Vagina (tissue), 2 donors: ENCODE measurements at regions of chr1 and their contacts with region 1.

Region 1: DNA sequence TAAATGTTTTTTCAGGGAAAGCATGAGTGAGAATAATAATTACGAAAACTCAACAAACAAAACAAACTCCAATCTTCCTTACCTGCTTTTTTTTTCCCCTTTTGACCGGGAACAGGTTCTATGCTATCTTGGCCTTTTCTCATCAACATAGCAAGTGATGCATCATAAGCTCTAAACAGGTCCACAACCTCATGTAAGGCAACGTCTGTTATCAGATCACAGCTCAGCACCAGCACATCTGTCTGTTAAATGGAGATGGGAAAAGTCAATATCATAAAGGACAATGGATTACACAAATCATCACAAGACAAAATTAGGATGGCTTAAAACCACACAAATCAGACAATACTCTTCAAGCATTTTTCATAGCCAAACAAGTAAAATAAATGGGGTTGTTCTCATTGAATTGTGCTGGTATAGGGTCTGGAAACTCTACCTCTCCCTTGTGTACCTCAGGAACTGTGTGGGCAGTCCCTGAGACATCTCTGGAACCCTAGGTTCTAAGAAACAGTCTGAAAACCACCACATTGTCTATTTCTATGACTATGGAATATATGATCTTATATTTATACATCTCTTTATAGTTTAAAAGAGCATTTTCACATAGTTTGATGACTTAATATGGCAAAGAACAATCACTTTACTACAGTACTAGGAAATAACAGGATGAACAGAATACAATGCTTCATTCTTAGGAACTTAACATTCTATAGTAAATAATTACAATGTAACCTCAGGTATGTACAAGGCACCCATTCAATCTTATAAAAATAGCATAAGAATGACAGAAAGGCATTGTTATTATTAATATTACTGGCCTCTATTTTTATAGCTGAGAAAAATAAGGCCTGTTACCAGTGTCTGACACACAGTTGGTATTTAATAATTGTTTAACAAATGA is 44.7 kb downstream of the EIF2B3 start:
- DNase-seq: no peak
- H3K4me3 ChIP-seq: no peak overlapping the region
- H3K27ac ChIP-seq: no peak overlapping the region
- H3K4me1 ChIP-seq: peaks cover 17% of the 10 kb centered on the region
- H3K27me3 ChIP-seq: no peaks in the 10 kb centered on the region
- CTCF ChIP-seq: no peak
- POLR2A ChIP-seq: no peak

Region 2: DNA sequence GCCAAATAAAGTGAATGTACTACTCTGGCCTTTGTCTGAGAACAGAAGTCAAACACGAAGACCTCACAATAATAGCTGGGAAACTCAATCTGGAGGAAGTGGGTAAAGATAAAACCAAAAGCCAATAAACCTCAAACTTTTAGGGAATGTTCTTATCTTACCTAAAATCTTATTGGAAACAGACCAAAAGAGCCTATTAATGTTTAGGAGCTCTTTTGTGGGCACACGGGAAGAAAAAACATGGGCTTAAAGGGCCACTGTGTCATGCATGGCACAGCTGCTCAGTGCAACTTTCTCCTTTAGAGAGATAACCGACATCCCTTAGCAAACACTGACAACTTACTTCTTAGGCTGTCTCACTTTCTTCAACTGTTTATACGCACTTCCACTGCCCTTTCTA is 28.6 kb after region 1 on chr1:
- intact Hi-C with region 1: loop called (anchors 2 kb)
- DNase-seq: no peak
- H3K4me3 ChIP-seq: no peak overlapping the region
- H3K27ac ChIP-seq: no peak overlapping the region
- H3K4me1 ChIP-seq: peaks cover 17% of the 10 kb centered on the region
- H3K27me3 ChIP-seq: no peaks in the 10 kb centered on the region
- CTCF ChIP-seq: no peak
- POLR2A ChIP-seq: no peak